HEK293T (cell line): ENCODE measurements at regions of chr20 and their contacts with region 1.

Region 1: DNA sequence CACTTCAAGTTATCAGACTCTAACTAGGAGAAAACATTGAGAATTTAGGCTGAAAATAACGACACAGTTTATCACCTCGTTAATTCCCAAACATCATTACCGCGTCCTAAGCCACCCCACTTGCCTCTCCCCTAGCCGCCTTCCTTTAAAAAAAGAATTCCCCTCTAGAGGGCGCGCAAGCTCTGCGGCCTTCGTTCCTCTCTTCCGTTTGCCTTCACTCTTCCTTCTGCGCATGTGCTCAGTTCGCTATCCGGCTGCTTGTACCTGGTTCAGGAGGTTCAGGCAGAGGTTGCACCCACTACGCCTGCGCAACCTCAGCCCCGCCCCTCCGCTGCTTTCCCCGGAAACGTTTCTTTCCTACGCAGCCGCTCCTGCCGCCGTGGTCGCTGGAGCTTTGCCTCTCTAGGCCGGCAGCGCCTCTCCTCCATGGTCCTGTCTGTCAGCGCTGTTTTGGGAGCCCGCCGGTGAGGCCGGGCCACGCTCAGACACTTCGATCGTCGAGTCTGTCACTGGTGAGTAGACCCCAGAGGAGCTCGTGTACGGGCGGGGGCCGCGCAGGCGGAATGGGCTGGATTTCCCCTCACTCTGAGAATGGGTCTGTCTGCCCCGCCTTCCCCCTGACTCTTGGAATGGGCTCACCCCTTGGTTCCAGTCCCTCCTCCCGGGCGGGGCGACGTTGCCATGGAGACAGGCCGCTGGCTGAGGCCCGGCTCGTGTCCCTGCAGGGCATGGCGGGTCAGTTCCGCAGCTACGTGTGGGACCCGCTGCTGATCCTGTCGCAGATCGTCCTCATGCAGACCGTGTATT is at the start of gene SYS1:
- DNase-seq: peak; percentile 98

Region 2: DNA sequence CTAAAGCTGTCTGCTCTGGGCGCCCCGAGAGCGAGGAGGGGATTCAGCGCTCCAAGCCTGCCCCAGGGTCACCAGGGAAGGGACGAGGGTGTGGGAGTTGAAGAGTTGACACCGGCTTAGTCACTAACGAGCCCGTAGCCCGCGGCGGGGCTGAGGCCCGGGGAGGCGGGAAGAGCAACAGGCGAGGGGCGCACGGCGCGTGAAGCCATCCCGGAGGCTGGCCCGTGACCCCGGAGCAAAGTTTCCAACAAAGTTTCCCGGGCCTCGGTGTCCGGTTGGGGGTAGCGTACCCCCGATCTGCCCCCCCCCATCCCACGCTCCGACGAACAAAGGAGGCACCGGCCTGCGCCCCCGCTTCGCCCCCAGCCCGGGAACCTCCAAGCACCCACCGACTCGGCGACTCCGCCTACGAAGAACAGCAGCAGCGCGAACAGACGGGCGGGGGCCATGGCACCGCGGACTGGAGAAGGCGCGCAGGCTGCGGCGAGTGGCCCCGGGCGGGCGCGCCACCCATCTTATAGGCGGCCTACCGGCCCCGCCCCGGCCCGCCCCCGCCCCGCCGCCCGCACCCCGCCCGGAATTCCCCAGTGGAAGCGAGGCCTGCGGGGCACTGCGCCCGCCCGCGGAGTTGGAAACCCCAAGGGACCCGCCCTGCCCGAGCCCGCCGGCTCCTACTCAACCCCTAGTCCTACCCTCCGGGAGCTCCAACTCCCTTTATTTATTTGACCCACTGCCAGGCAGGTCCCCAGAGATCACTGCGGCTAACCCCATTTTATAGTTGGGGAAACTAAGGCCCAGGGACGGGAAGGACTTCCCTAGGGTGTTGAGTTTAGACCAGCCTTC is 14.8 kb before region 1 on chr20 and contains the start of gene SDC4:
- CTCF ChIA-PET with region 1: interaction called, 7 read pairs
- POLR2A ChIA-PET with region 1: interaction called, 16 read pairs
- DNase-seq: peak; percentile 69

Region 3: GRCh38 chr20:45373353-45374100 is 10.5 kb after region 1 on chr20:
- CTCF ChIA-PET with region 1: interaction called, 8 read pairs
- POLR2A ChIA-PET with region 1: interaction called, 17 read pairs
- DNase-seq: peak; percentile 83

Region 4: GRCh38 chr20:45406259-45407066 is 43.5 kb after region 1 on chr20:
- CTCF ChIA-PET with region 1: no interaction called
- POLR2A ChIA-PET with region 1: interaction called, 25 read pairs
- DNase-seq: peak; percentile 68

Region 5: GRCh38 chr20:45415774-45416637 is 53.0 kb after region 1 on chr20 and contains the start of gene PIGT:
- CTCF ChIA-PET with region 1: no interaction called
- POLR2A ChIA-PET with region 1: interaction called, 17 read pairs
- DNase-seq: peak; percentile 88

Region 6: DNA sequence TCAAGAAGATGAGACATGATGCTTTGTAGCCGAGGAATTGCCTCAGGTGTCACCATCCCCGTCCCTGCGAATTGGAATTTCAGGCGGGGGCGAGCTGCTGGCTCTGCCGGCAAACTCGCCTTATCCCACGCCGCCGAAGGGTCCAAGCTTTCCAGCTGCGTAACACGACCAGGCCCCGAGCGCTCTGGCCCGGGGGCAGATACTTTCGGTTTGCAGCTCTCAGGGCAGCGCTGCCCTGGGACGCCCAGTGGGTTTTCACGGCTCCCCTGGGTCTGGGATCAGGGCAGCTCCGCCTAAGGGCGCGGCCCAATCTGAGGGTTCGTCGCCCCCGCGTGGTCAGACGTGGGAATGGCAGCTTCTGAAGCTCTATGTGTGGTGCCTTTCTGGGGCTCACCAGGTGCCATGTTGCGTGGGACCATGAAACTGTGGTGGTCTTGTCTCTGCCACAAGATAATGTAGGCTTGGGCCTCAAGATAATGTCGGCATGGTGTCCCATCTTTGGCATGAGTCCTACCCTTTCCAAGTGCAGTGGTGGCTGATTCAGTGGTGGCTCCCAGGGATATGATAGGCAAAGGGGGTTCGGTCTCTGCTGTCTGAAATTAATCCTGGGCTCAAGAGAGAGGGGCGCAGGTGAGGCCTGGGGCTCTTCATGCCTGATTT is 73.9 kb after region 1 on chr20:
- CTCF ChIA-PET with region 1: interaction called, 9 read pairs
- POLR2A ChIA-PET with region 1: interaction called, 15 read pairs
- DNase-seq: peak; percentile 85